Prostate gland (tissue), 2 donors: ENCODE measurements at regions of chr9 and their contacts with region 1.

Region 1: GRCh38 chr9:135961277-135961705 is at the start of gene UBAC1:
- DNase-seq: peak; percentile 95
- H3K4me3 ChIP-seq: peak within 1 kb of the TSS; percentile 86 to 97
- H3K27ac ChIP-seq: peak within 1 kb of the TSS; percentile 82 to 87
- H3K4me1 ChIP-seq: peaks cover 3% of the 10 kb centered on the region
- H3K27me3 ChIP-seq: no peaks in the 10 kb centered on the region
- CTCF ChIP-seq: peak; percentile 48 to 96 (median 72)
- POLR2A ChIP-seq: no peak
- total RNA-seq, gene UBAC1: 53.7 to 59.1 TPM

Region 2: DNA sequence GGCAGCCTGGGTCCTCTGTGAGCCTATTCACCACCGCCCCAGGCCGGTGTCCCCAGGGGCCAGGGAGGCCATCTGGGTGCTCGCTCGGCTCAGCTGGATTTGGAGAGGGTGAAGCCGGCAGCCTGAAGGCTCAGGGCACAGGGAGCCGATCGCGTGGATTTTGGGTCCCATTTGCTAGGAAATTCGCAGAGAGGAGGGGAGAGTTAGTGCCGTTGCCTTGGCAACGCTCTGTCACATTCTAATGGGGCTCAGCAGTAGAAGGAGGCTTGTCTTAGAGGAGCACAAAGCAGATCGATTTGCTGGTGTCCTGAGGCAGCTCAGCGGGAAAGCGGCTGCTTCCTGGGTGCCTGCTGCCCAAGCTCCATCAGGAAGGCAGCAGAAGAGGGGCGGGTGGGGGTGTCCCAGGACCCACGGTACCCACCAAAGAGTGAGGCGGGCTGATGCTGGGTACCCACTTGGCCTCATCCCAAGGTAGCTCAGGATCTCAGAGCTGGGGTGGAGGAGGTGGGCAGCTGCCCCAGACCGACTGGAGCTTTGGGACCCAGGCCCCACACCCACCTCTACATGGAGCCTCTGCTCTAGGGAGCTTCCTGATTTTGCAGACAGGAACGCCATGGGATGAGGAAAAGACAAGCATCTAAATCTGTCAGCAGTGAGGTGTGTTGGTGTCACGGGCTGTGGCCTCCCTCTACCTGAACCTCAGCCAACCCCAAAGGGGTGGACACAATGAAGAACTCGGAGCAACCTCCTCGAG is 890.9 kb before region 1 on chr9:
- intact Hi-C with region 1: no loop called
- DNase-seq: no peak
- H3K4me3 ChIP-seq: no peak overlapping the region
- H3K27ac ChIP-seq: no peak overlapping the region
- H3K4me1 ChIP-seq: no peaks in the 10 kb centered on the region
- H3K27me3 ChIP-seq: peaks cover 8% of the 10 kb centered on the region
- CTCF ChIP-seq: no peak
- POLR2A ChIP-seq: no peak

Region 3: GRCh38 chr9:135183528-135184180 is 777.6 kb before region 1 on chr9:
- intact Hi-C with region 1: no loop called
- DNase-seq: no peak
- H3K4me3 ChIP-seq: no peak overlapping the region
- H3K27ac ChIP-seq: no peak overlapping the region
- H3K4me1 ChIP-seq: no peaks in the 10 kb centered on the region
- H3K27me3 ChIP-seq: no peaks in the 10 kb centered on the region
- CTCF ChIP-seq: no peak
- POLR2A ChIP-seq: no peak

Region 4: DNA sequence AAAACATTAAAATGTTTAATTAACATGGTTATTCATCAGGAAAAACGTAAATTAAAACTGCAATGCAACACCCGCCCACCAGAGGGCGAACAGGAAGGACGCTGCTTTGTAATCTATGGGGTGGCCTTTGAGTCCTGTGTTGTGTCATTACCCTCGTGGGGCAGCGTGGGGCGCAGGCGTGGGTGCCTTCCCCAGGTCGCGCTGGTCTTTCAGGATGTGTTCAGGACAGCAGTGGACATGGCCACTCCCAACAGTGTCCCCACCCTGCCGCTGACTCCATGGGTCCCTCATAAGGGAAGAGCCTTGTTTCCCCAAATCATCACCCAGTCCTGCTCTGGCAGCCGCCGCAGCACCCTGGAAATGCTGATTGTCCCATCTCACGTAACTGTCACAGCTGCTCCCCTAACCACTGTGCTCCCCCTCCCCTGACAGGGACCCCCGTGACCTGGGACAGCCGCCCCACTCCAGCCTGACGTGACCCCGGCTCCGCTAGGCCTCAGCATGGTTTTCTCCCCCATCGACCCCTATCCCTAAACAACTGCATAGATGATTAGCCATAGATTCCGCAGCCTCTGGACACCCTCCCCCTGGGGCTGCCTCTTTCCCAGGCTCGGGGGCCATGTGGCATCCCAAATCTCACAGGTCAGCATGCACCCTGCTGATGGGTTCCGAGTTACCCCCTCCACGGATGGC is 358.4 kb before region 1 on chr9:
- intact Hi-C with region 1: loop called (anchors 10 kb)
- DNase-seq: no peak
- H3K4me3 ChIP-seq: no peak overlapping the region
- H3K27ac ChIP-seq: no peak overlapping the region
- H3K4me1 ChIP-seq: no peaks in the 10 kb centered on the region
- H3K27me3 ChIP-seq: no peaks in the 10 kb centered on the region
- CTCF ChIP-seq: peak; percentile 22 to 60 (median 40)
- POLR2A ChIP-seq: no peak

Region 5: DNA sequence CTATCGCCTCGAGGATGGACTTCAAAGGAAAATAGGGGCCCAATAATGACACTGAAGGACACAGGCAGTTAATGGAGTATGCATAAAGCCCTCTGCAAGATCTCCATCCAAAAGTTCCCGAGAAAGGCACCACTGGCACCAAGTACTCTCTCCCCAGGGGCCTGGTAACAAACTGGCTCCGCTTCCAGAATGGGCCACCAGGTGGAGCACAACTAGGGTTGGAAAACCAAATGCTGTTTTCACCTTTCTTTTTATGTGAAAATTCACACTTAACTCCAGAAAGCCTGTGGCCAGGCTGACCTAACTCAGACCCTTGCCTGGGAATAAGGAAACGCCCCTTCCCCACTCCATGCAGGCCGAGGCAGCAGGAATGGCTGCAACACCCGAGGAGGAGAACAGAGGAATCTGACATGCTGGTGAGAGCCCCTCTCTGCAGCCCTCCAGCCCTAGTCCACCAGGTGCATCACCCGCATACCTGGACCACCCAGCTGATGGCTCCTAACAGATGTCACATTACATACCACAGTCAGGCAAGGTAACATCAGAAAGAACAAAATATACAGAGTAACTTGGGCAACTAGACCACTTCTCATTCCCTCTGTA is 96.7 kb before region 1 on chr9:
- intact Hi-C with region 1: loop called (anchors 10 kb)
- DNase-seq: peak; percentile 19
- H3K4me3 ChIP-seq: no peak overlapping the region
- H3K27ac ChIP-seq: no peak overlapping the region
- H3K4me1 ChIP-seq: no peaks in the 10 kb centered on the region
- H3K27me3 ChIP-seq: no peaks in the 10 kb centered on the region
- CTCF ChIP-seq: peak; percentile 70 to 84 (median 79)
- POLR2A ChIP-seq: no peak

Region 6: DNA sequence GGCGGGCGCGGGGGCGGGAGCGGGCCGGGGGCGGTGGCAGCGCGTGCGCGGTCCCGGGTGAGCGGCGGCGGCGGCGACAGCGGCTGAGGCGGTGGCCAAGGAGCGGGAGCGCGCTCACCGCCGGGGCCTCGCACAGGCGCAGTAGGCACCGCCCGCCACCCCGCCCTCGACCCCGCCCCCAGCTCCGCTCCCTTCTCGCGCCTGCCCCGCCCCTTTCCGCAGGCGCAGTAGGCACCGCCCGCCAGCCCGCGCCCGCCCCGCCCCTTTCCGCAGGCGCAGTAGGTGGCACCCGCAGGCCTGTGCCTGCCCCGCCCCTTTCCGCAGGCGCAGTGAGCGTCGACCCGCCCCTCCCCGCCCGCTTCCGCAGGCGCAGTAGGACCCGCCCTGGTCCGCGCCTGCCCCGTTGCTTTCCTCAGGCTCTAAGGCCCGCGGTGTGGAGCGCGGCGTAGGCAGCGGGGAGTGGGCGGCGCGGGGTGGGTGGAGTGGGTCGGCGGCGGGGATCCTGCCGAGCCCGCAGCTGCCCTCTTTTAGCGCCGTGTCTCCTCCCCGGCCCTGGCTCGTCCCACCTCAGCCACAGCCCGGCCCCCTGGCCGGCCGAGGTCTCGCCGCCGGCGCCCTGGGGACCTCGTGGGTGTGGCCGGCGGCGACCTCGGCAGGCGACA is 53.7 kb before region 1 on chr9 and contains the start of gene CAMSAP1:
- intact Hi-C with region 1: loop called (anchors 5 kb)
- DNase-seq: peak; percentile 85
- H3K4me3 ChIP-seq: peak within 1 kb of the TSS; percentile 79 to 92
- H3K27ac ChIP-seq: peak within 1 kb of the TSS; percentile 73 to 80
- H3K4me1 ChIP-seq: no peaks in the 10 kb centered on the region
- H3K27me3 ChIP-seq: no peaks in the 10 kb centered on the region
- CTCF ChIP-seq: no peak
- POLR2A ChIP-seq: peak; percentile 73
- total RNA-seq, gene CAMSAP1: 28.3 to 86.6 TPM

Region 7: GRCh38 chr9:136539427-136540421 is 578.4 kb after region 1 on chr9:
- intact Hi-C with region 1: no loop called
- DNase-seq: peak; percentile 64
- H3K4me3 ChIP-seq: no peak overlapping the region
- H3K27ac ChIP-seq: peak overlapping the region; percentile 40 to 72
- H3K4me1 ChIP-seq: peaks cover 13% of the 10 kb centered on the region
- H3K27me3 ChIP-seq: no peaks in the 10 kb centered on the region
- CTCF ChIP-seq: no peak
- POLR2A ChIP-seq: peak; percentile 44